Activated CD4-positive, alpha-beta T cell treated with anti-CD3 and anti-CD28 coated beads for 36 hours (primary cell): ENCODE measurements at regions of chr12 and their contacts with region 1.

Region 1: DNA sequence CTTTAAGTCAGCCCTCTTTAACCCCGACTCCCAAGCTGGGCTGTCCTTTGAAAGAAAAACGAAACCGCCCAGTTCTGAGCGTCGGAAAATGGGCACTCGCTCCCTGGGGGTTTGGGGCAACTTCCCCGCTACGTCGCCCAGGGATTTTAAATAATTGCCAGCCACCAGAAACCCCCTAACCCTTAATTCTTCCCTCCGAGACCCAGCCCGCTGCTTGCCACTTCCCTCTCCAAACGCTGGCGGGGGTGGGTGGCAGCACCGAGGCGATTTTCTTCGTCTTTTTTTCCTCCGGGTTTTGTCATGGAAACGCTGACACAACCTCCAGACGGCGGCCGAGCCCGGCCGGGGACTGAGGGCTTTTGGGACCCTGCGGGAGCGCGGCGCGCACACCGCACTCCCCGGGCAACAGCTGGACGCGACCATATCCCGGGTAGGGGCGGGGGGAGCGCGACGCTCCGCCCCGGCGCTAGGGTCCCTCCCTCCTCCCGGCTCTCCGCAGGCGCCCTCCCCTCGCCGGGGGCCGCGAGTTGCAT is at the start of gene CHST11:
- DNase-seq: peak; percentile 88
- ATAC-seq: peak; percentile 76
- H3K4me3 Mint-ChIP-seq: peak within 1 kb of the TSS; percentile 91
- H3K27ac Mint-ChIP-seq: peak within 1 kb of the TSS; percentile 97
- H3K4me1 Mint-ChIP-seq: peaks cover 35% of the 10 kb centered on the region
- H3K27me3 Mint-ChIP-seq: no peaks in the 10 kb centered on the region
- total RNA-seq, gene CHST11: 33.3 to 33.6 TPM

Region 2: GRCh38 chr12:103840876-103841689 is 615.4 kb before region 1 on chr12 and contains the start of gene NT5DC3:
- CTCF ChIA-PET with region 1: no interaction called
- POLR2A ChIA-PET with region 1: no interaction called
- intact Hi-C with region 1: loop called in 1 of 2 experiments (anchors 5 kb)
- DNase-seq: peak; percentile 91
- ATAC-seq: peak; percentile 88
- H3K4me3 Mint-ChIP-seq: peak within 1 kb of the TSS; percentile 77
- H3K27ac Mint-ChIP-seq: peak within 1 kb of the TSS; percentile 63
- H3K4me1 Mint-ChIP-seq: peaks cover 22% of the 10 kb centered on the region
- H3K27me3 Mint-ChIP-seq: no peaks in the 10 kb centered on the region
- total RNA-seq, gene NT5DC3: 7.3 to 8.9 TPM

Region 3: GRCh38 chr12:104358347-104359003 is 98.0 kb before region 1 on chr12:
- CTCF ChIA-PET with region 1: no interaction called
- POLR2A ChIA-PET with region 1: no interaction called
- intact Hi-C with region 1: no loop called
- DNase-seq: peak; percentile 82
- ATAC-seq: peak; percentile 90
- H3K4me3 Mint-ChIP-seq: no peak overlapping the region
- H3K27ac Mint-ChIP-seq: no peak overlapping the region
- H3K4me1 Mint-ChIP-seq: peaks cover 3% of the 10 kb centered on the region
- H3K27me3 Mint-ChIP-seq: no peaks in the 10 kb centered on the region

Region 4: DNA sequence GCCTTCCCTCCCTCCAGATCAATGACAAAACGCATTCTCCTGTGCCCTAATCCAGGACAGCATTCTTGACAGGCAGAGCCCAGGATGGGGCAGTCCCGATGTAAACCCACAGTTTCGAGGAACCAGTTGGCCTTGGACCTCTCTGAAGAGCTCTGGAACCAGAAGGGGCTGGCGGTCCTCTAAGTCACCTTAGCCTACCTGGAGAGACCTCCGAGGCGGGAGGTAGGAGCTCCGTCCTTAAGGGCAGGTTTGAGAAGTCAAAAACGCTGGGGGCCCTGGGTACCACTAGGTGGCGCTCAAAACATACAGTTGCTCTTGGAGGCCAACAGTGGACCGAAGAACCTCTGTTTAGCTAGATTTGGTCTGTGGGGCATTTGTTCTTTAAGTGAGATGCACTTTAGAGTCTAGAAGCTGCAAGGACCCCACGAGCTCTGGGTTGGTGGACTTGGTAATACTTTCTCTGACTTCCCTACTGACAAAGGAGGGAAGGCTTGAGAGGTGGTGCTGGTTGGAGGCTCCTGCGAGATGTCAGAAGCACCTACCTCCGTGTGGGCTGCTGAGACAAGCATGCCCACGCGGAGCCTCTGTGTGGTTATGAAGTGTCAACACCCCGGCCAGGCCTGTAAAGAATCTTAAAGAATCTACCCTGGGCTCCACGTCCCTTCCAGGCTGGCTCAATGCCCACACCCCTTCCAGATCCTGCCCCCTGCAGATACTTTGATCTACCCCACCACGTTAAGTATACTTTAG is 74.6 kb before region 1 on chr12:
- CTCF ChIA-PET with region 1: interaction called, 8 read pairs
- POLR2A ChIA-PET with region 1: no interaction called
- intact Hi-C with region 1: loop called (anchors 2 to 5 kb)
- DNase-seq: peak; percentile 89
- ATAC-seq: peak; percentile 86
- H3K4me3 Mint-ChIP-seq: no peak overlapping the region
- H3K27ac Mint-ChIP-seq: no peak overlapping the region
- H3K4me1 Mint-ChIP-seq: peaks cover 7% of the 10 kb centered on the region
- H3K27me3 Mint-ChIP-seq: peaks cover 5% of the 10 kb centered on the region

Region 5: GRCh38 chr12:104494137-104494792 is 37.8 kb after region 1 on chr12:
- CTCF ChIA-PET with region 1: interaction called, 16 read pairs
- POLR2A ChIA-PET with region 1: interaction called, 14 read pairs
- intact Hi-C with region 1: loop called (anchors 1 kb)
- DNase-seq: peak; percentile 88
- ATAC-seq: peak; percentile 72
- H3K4me3 Mint-ChIP-seq: peak overlapping the region; percentile 35
- H3K27ac Mint-ChIP-seq: peak overlapping the region; percentile 85
- H3K4me1 Mint-ChIP-seq: peaks cover 88% of the 10 kb centered on the region
- H3K27me3 Mint-ChIP-seq: no peaks in the 10 kb centered on the region

Region 6: DNA sequence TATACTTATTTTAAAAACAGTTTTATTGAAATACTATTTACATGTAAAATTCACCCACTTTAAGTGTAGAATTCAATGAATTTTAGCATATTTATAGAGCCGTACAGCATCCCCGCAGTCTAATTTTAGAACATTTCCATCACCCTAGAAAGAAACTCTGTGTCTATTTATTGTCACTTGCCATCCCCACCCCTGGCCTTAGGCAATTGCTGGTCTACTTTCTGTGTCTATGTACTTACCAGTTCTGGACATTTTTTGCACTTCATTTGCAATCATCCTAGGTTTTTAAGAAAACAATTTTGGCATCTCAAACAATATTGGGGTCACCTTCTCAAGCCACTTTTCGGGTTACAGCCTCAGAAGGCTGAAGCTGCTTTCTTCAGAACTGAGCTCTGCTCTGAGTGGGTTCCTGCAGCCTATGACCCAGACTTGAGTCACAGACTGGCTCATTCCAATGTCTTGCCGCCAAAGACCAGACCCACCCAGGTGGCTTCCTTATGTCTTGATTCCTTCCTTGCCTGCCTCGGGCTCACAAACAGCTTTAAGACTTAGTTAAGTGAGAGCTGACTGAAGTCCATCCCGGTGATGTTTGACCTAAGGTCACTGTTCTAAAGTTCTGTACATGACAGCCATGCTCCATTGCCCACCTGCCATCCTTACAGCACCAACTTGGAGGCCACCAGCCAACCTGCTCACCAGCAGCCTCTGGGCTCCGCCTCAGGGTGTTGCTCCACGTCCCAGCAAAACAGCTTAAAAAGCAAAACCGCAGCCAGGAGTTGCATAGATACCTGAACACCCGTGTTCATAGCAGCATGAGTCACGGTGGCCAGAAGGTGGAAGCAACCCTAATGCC is 131.8 kb after region 1 on chr12:
- CTCF ChIA-PET with region 1: no interaction called
- POLR2A ChIA-PET with region 1: no interaction called
- intact Hi-C with region 1: no loop called
- DNase-seq: no peak
- ATAC-seq: no peak
- H3K4me3 Mint-ChIP-seq: no peak overlapping the region
- H3K27ac Mint-ChIP-seq: no peak overlapping the region
- H3K4me1 Mint-ChIP-seq: peaks cover 29% of the 10 kb centered on the region
- H3K27me3 Mint-ChIP-seq: no peaks in the 10 kb centered on the region

Region 7: DNA sequence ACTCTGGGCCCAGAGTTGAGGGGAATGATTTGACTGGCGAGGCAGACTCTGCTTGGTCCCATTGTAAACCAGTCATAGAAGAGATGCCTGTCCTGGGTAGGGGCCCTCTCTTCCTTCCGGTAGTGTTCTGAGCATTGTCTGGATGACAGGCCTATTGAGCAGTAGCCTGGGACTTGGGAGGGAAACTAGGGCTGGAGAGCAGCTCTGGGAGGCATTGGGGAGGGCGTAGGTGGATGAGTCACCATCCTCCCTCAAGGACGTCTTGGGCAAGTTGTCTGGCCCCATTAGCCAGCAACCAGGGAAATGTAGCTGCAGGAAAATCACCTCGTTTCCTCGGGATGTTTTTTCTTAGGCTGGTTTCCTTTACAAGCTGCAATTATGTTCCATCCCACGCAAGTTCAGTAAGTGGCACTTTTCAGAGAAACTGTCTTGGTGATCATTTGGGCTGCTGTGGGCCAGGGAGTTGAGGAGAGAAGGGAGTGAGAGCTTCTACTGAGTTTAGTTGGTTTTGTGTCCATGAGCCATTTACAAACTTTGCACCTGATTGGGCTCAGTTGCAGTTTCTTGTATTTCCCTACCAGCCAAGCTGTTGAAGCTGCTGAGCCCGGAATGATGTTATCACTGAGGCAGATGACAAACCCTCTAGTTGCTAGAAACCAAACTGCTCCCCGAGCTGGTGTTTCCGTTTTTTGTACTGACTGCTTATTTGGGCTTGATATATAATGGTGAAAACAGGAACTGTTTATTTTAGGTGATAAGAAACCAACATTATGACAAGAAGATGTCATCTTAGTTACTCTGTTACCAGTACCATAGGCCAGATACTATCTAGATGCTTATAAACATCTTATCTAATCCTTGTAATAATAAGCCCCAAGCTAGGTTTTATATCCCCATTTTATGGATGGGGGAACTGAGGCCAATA is 147.8 kb after region 1 on chr12:
- CTCF ChIA-PET with region 1: interaction called, 3 read pairs
- POLR2A ChIA-PET with region 1: no interaction called
- intact Hi-C with region 1: loop called in 1 of 2 experiments (anchors 1 kb)
- DNase-seq: peak; percentile 75
- ATAC-seq: peak; percentile 89
- H3K4me3 Mint-ChIP-seq: no peak overlapping the region
- H3K27ac Mint-ChIP-seq: peak overlapping the region; percentile 78
- H3K4me1 Mint-ChIP-seq: peaks cover 33% of the 10 kb centered on the region
- H3K27me3 Mint-ChIP-seq: no peaks in the 10 kb centered on the region

Region 8: GRCh38 chr12:104958009-104958945 is 501.8 kb after region 1 on chr12 and contains the start of gene SLC41A2:
- CTCF ChIA-PET with region 1: no interaction called
- POLR2A ChIA-PET with region 1: no interaction called
- intact Hi-C with region 1: loop called (anchors 2 kb)
- DNase-seq: peak; percentile 90
- ATAC-seq: peak; percentile 86
- H3K4me3 Mint-ChIP-seq: peak within 1 kb of the TSS; percentile 82
- H3K27ac Mint-ChIP-seq: peak within 1 kb of the TSS; percentile 92
- H3K4me1 Mint-ChIP-seq: peaks cover 27% of the 10 kb centered on the region
- H3K27me3 Mint-ChIP-seq: peaks cover 21% of the 10 kb centered on the region
- total RNA-seq, gene SLC41A2: 7.9 to 11.1 TPM